Activated CD4-positive, alpha-beta T cell treated with anti-CD3 and anti-CD28 coated beads for 36 hours (primary cell): ENCODE measurements at regions of chr7 and their contacts with region 1.

Region 1: GRCh38 chr7:83655951-83656556 is 7.1 kb upstream of the SEMA3E start:
- DNase-seq: peak; percentile 11
- ATAC-seq: no peak
- H3K4me3 Mint-ChIP-seq: no peak overlapping the region
- H3K27ac Mint-ChIP-seq: no peak overlapping the region
- H3K4me1 Mint-ChIP-seq: no peaks in the 10 kb centered on the region
- H3K27me3 Mint-ChIP-seq: no peaks in the 10 kb centered on the region

Region 2: GRCh38 chr7:83166781-83167180 is 489.3 kb before region 1 on chr7:
- CTCF ChIA-PET with region 1: no interaction called
- POLR2A ChIA-PET with region 1: no interaction called
- intact Hi-C with region 1: no loop called
- DNase-seq: no peak
- ATAC-seq: no peak
- H3K4me3 Mint-ChIP-seq: no peak overlapping the region
- H3K27ac Mint-ChIP-seq: no peak overlapping the region
- H3K4me1 Mint-ChIP-seq: peaks cover 2% of the 10 kb centered on the region
- H3K27me3 Mint-ChIP-seq: peaks cover 8% of the 10 kb centered on the region

Region 3: GRCh38 chr7:83410989-83411591 is 245.0 kb before region 1 on chr7:
- CTCF ChIA-PET with region 1: no interaction called
- POLR2A ChIA-PET with region 1: no interaction called
- intact Hi-C with region 1: loop called (anchors 2 to 5 kb)
- DNase-seq: peak; percentile 14
- ATAC-seq: no peak
- H3K4me3 Mint-ChIP-seq: no peak overlapping the region
- H3K27ac Mint-ChIP-seq: no peak overlapping the region
- H3K4me1 Mint-ChIP-seq: no peaks in the 10 kb centered on the region
- H3K27me3 Mint-ChIP-seq: no peaks in the 10 kb centered on the region